Kidney (tissue), 22 donors: ENCODE measurements at regions of chr20 and their contacts with region 1.

Region 1: GRCh38 chr20:18005231-18006109 is 36.7 kb downstream of the MGME1 start:
- DNase-seq: no peak
- H3K4me3 ChIP-seq: no peak overlapping the region
- H3K27ac ChIP-seq: peak overlapping the region in 1 of 2 donors; percentile 26
- H3K4me1 ChIP-seq: peaks cover 0 to 12% (median 0%) of the 10 kb centered on the region in 3 donors
- H3K27me3 ChIP-seq: no peaks in the 10 kb centered on the region
- CTCF ChIP-seq: no peak

Region 2: DNA sequence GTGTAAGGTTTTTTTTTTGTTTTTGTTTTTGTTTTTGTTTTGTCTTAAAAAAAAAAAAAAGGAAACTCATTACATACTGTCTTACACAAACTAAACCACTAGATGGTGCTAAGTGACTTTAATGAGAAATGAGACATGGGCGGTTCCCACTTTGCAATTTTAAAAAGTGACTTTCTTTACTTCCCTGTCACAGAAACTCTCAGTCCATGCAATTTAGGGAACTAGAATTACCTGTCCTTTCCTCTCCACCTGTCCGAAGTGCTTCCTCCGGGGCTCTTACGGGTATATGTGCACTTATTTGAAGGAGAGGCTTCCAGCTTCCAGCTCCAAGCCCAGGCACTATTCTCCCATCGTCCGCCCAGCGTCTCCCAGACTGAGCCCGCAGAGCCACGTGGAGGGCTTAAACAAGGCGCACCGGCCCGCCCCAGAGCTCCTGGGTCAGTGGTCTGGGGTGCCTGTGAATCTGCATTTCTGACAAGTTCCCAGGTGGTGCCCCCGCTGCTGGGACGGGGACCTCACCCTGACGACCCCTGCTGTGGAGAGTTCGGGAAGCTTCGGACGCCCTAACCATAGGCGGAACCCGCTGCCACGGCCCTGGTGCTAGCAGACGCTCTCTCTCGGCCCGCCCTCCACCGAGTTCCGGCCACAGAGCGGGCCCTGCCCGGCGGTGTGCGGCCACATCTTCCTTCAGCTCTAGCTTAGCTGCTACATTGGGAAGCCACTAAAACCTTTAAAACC is 500.4 kb before region 1 on chr20:
- intact Hi-C with region 1: loop called (anchors 10 kb)
- DNase-seq: peak; percentile 49 to 85 (median 75)
- H3K4me3 ChIP-seq: peak overlapping the region; percentile 41 to 76 (median 63)
- H3K27ac ChIP-seq: no peak overlapping the region
- H3K4me1 ChIP-seq: peaks cover 0 to 3% (median 0%) of the 10 kb centered on the region in 3 donors
- H3K27me3 ChIP-seq: no peaks in the 10 kb centered on the region
- CTCF ChIP-seq: peak; percentile 52